ENCODE measurements at regions of chr22 and their contacts with region 1.

Region 1: GRCh38 chr22:40898850-40899357 is 37.0 kb upstream of the DNAJB7 start:
- DNase-seq: peak; percentile 55
- H3K4me3 ChIP-seq: no peak overlapping the region
- H3K27ac ChIP-seq: no peak overlapping the region
- H3K4me1 ChIP-seq: no peaks in the 10 kb centered on the region
- H3K27me3 ChIP-seq: no peaks in the 10 kb centered on the region
- CTCF ChIP-seq: peak; percentile 33 to 44
- POLR2A ChIP-seq: no peak

Region 2: GRCh38 chr22:40525249-40525884 is 373.5 kb before region 1 on chr22:
- CTCF ChIA-PET with region 1: interaction called, 14 read pairs
- POLR2A ChIA-PET with region 1: no interaction called
- dilution Hi-C with region 1: no loop called
- intact Hi-C with region 1: no loop called
- DNase-seq: peak; percentile 65
- H3K4me3 ChIP-seq: no peak overlapping the region
- H3K27ac ChIP-seq: no peak overlapping the region
- H3K4me1 ChIP-seq: peaks cover 2% of the 10 kb centered on the region
- H3K27me3 ChIP-seq: no peaks in the 10 kb centered on the region
- CTCF ChIP-seq: peak; percentile 81 to 84
- POLR2A ChIP-seq: no peak

Region 3: DNA sequence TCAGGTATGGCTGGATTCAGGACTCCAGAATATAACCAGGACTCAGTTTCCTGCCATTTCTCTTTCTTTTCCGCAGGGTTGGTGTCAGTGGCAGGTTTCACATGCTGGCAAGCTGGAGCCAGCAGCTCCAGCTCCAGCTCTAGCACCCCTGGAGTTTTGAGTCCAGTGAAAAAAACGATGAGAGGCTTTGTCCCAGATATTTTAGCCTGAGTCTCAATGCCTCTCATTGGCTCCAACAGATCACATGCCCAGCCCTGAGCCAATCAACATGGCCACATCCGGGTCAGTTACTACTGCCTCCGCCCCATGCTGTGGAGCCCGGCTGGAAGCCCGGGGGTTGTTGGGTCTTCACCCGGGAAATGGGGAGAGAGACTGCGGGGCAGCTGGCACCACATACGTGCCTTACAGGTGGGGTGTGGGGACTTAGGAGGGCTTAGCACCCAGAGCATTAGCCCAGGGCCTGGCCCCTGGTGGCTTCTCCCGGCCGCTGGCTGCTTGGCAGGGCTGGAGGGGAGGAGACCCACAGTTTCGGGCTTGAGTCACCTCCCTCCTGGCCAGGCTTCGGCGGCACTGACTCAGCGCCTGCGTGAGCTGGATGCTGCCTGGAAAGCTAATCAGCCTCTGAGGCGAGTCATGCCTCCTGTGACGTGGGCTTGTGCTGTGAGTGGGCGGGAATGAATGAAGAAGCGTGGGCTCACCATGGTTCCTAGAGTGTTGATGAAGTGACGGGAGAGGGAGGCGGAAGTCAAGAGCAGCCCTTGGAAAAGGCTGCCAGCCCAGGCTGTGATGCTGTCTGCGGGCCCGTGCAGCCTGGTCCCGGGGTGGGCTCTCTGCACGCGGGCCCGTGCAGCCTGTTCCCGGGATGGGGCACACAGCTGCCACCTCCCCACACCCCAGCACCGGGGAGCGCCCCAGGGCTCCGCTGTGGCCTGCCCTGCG is 247.1 kb before region 1 on chr22:
- CTCF ChIA-PET with region 1: interaction called, 20 read pairs
- POLR2A ChIA-PET with region 1: interaction called, 4 read pairs
- dilution Hi-C with region 1: no loop called
- intact Hi-C with region 1: no loop called
- DNase-seq: peak; percentile 98
- H3K4me3 ChIP-seq: peak overlapping the region in 2 of 3 experiments; percentile 49 to 64
- H3K27ac ChIP-seq: peak overlapping the region; percentile 88
- H3K4me1 ChIP-seq: peaks cover 14% of the 10 kb centered on the region
- H3K27me3 ChIP-seq: no peaks in the 10 kb centered on the region
- CTCF ChIP-seq: peak in 1 of 2 donors; percentile 6
- POLR2A ChIP-seq: peak; percentile 91

Region 4: GRCh38 chr22:40757071-40757470 is 141.8 kb before region 1 on chr22:
- CTCF ChIA-PET with region 1: interaction called, 20 read pairs
- POLR2A ChIA-PET with region 1: no interaction called
- dilution Hi-C with region 1: no loop called
- intact Hi-C with region 1: no loop called
- DNase-seq: no peak
- H3K4me3 ChIP-seq: no peak overlapping the region
- H3K27ac ChIP-seq: no peak overlapping the region
- H3K4me1 ChIP-seq: no peaks in the 10 kb centered on the region
- H3K27me3 ChIP-seq: no peaks in the 10 kb centered on the region
- CTCF ChIP-seq: no peak
- POLR2A ChIP-seq: no peak

Region 5: GRCh38 chr22:40856513-40857308 is 42.2 kb before region 1 on chr22 and contains the starts of genes ST13 and XPNPEP3:
- CTCF ChIA-PET with region 1: interaction called, 13 read pairs
- POLR2A ChIA-PET with region 1: no interaction called
- dilution Hi-C with region 1: no loop called
- intact Hi-C with region 1: loop called (anchors 2 kb)
- DNase-seq: peak; percentile 95
- H3K4me3 ChIP-seq: peak within 1 kb of the TSS; percentile 80 to 99 (median 94)
- H3K27ac ChIP-seq: peak within 1 kb of the TSS; percentile 93
- H3K4me1 ChIP-seq: peaks cover 27% of the 10 kb centered on the region
- H3K27me3 ChIP-seq: no peaks in the 10 kb centered on the region
- CTCF ChIP-seq: peak in 1 of 2 donors; percentile 27
- POLR2A ChIP-seq: peak; percentile 76
- total RNA-seq, gene ST13: 249 and 250 TPM in 2 replicates
- total RNA-seq, gene XPNPEP3: 21.2 TPM in 2 replicates

Measured in endothelial cell of umbilical vein (primary cell).